Aorta (tissue), 5 donors: ENCODE measurements at regions of chr1 and their contacts with region 1.

Region 1: GRCh38 chr1:227245613-227246320 is 72.5 kb downstream of the CDC42BPA start:
- DNase-seq: peak in 1 of 2 donors; percentile 54
- ATAC-seq: peak; percentile 60
- H3K4me3 ChIP-seq: no peak overlapping the region
- H3K27ac ChIP-seq: no peak overlapping the region
- H3K4me1 ChIP-seq: no peaks in the 10 kb centered on the region
- H3K27me3 ChIP-seq: no peaks in the 10 kb centered on the region

Region 2: GRCh38 chr1:227299241-227299627 is 53.5 kb after region 1 on chr1:
- intact Hi-C with region 1: loop called in 1 of 2 experiments (anchors 10 kb)
- DNase-seq: no peak
- ATAC-seq: no peak
- H3K4me3 ChIP-seq: no peak overlapping the region
- H3K27ac ChIP-seq: no peak overlapping the region
- H3K4me1 ChIP-seq: peaks cover 2% of the 10 kb centered on the region in 2 donors
- H3K27me3 ChIP-seq: no peaks in the 10 kb centered on the region

Region 3: DNA sequence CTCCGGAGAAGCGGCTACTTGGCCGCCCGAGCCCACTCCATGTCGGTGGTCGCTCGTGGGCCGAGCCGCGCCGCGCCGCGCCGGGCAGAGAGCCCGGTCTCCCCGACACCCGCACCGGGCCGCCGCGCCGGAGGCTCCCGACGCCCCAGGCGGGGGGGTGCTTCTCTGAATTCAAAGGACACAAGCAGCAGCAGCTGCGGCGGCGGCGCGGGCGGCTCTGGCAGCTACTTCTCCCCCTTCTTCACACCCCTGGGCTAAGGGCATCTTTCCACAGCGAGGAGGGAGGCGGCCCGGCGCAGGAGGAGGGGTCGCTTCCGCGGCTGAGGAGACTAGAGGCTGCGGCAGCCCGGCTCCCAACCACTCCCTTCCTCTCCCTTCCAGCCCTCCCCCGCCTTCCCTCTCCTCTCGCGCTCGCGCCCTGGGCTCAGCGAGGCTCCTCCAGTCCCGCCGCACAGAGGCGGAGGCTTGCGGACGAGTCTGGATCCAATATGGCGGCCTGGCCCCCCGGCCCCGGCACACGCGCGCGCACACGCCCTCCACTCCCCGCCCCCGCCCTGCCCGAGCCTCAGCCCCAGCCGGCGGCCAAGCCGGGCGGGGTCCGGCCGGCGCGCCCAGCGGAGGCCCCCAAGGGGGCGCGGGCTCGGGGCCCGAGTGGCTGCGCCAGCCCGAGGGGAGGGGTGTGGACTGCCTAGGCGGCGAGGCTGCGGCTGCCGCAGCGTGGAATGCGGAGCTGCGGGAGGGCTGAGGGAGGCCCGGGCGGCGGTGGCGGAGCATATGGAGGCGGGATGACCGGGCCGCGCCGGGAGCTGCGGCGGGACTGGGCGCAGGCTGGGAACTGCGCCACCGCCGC is 72.5 kb after region 1 on chr1 and contains the start of gene CDC42BPA:
- intact Hi-C with region 1: loop called in 1 of 2 experiments (anchors 10 kb)
- DNase-seq: peak; percentile 89 to 93
- ATAC-seq: peak; percentile 92
- H3K4me3 ChIP-seq: peak within 1 kb of the TSS; percentile 97 to 99
- H3K27ac ChIP-seq: peak within 1 kb of the TSS; percentile 64 to 73
- H3K4me1 ChIP-seq: no peaks in the 10 kb centered on the region
- H3K27me3 ChIP-seq: no peaks in the 10 kb centered on the region
- total RNA-seq, gene CDC42BPA: 50.5 to 71.3 TPM